Dendritic cell treated with granulocyte-macrophage colony-stimulating factor and Interleukin-4, amounts not matched to agents 40 ng/mL and 50 ng/mL, for 4 days (primary cell): ENCODE measurements at regions of chr2 and their contacts with region 1.

Region 1: GRCh38 chr2:117936871-117937428 is 76.9 kb downstream of the CCDC93 start:
- H3K4me3 Mint-ChIP-seq: no peak overlapping the region
- H3K27ac Mint-ChIP-seq: no peak overlapping the region
- H3K4me1 Mint-ChIP-seq: no peaks in the 10 kb centered on the region
- H3K27me3 Mint-ChIP-seq: no peaks in the 10 kb centered on the region

Region 2: GRCh38 chr2:117820444-117820843 is 116.5 kb before region 1 on chr2:
- intact Hi-C with region 1: loop called (anchors 10 kb)
- H3K4me3 Mint-ChIP-seq: no peak overlapping the region
- H3K27ac Mint-ChIP-seq: no peak overlapping the region
- H3K4me1 Mint-ChIP-seq: peaks cover 10% of the 10 kb centered on the region
- H3K27me3 Mint-ChIP-seq: no peaks in the 10 kb centered on the region

Region 3: DNA sequence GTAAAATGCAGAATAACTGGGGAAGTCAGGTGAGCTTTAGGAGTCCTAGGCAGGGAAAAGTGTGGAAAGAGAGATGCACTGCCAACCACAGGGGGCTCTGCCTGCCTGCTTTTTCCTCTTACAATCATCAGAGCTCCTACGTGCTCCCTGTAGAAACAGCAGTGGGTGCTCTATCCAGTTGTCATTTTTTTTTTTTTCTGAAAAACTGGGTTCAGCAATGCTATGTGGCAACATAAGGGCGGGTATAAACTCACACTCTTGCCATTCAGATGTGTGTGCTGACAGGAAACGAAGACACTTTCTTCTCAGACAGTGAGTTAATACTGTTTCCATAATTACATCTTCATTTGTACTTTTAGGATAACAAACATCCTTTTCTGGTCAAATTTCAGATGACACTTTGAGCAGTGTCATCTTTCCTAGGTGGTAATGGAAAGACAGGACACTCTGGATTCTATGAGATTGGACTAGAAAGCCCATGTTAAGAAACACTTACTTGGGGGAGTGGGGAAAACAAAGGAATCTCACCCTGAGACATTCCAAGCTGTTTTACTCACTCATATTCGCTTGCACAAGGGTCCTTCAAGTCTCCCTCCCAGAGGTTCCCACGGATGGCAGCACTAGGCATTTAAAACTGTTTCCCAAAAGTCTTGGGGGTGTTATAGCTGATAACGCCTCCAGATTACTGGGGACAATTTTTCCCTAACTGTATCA is 35.6 kb after region 1 on chr2:
- intact Hi-C with region 1: loop called (anchors 5 kb)
- H3K4me3 Mint-ChIP-seq: no peak overlapping the region
- H3K27ac Mint-ChIP-seq: no peak overlapping the region
- H3K4me1 Mint-ChIP-seq: peaks cover 16% of the 10 kb centered on the region
- H3K27me3 Mint-ChIP-seq: no peaks in the 10 kb centered on the region